Activated CD8-positive, alpha-beta memory T cell treated with anti-CD3 and anti-CD28 coated beads, Interleukin-2, amount 10 ng/mL, durations not matched to agents 7 days and 5 days (primary cell): ENCODE measurements at regions of chr5 and their contacts with region 1.

Region 1: GRCh38 chr5:173331956-173332479 is 3.8 kb upstream of the STC2 start:
- DNase-seq: peak; percentile 92
- ATAC-seq: peak; percentile 82
- H3K4me3 Mint-ChIP-seq: no peak overlapping the region
- H3K27ac Mint-ChIP-seq: peak overlapping the region; percentile 22
- H3K4me1 Mint-ChIP-seq: peaks cover 33% of the 10 kb centered on the region
- H3K27me3 Mint-ChIP-seq: peaks cover 42% of the 10 kb centered on the region

Region 2: DNA sequence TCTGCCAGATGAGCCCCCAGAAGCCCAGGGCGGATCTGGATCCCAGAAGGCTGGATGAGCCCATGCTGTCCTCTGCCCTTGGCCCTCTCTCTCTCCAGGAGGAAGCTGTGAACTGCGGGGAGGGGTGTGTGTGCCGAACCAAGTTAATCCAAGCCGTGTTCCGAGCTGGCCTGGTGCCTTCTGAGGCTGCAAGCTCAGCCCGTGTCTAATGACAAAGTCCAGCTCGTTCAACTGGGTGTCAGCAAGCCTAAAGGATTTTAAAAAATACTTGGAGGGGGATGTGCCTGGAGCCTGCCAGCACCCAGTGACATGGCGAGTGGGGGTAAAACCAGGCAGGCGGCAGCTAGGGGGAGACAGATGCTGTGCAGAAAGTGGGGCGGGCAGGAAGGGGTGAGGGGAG is 11.8 kb before region 1 on chr5:
- CTCF ChIA-PET with region 1: interaction called, 15 read pairs
- DNase-seq: no peak
- ATAC-seq: no peak
- H3K4me3 Mint-ChIP-seq: no peak overlapping the region
- H3K27ac Mint-ChIP-seq: no peak overlapping the region
- H3K4me1 Mint-ChIP-seq: peaks cover 14% of the 10 kb centered on the region
- H3K27me3 Mint-ChIP-seq: peaks cover 18% of the 10 kb centered on the region